PC-9 (cell line): ENCODE measurements at regions of chr18 and their contacts with region 1.

Region 1: GRCh38 chr18:6486764-6487426 is 72.2 kb upstream of the L3MBTL4 start:
- DNase-seq: no peak
- H3K4me3 ChIP-seq: no peak overlapping the region
- H3K27ac ChIP-seq: no peak overlapping the region
- H3K4me1 ChIP-seq: no peaks in the 10 kb centered on the region
- H3K27me3 ChIP-seq: peaks cover 46% of the 10 kb centered on the region
- CTCF ChIP-seq: no peak

Region 2: GRCh38 chr18:6145645-6146319 is 341.1 kb before region 1 on chr18:
- CTCF ChIA-PET with region 1: interaction called, 17 read pairs
- POLR2A ChIA-PET with region 1: no interaction called
- intact Hi-C with region 1: no loop called
- DNase-seq: no peak
- H3K4me3 ChIP-seq: no peak overlapping the region
- H3K27ac ChIP-seq: no peak overlapping the region
- H3K4me1 ChIP-seq: no peaks in the 10 kb centered on the region
- H3K27me3 ChIP-seq: 0 out of 2 replicates have a peak, but pooled peaks cover 7% of the 10 kb centered on the region
- CTCF ChIP-seq: no peak